Left ventricle myocardium inferior (tissue), 1 donor: ENCODE measurements at regions of chr18 and their contacts with region 1.

Region 1: DNA sequence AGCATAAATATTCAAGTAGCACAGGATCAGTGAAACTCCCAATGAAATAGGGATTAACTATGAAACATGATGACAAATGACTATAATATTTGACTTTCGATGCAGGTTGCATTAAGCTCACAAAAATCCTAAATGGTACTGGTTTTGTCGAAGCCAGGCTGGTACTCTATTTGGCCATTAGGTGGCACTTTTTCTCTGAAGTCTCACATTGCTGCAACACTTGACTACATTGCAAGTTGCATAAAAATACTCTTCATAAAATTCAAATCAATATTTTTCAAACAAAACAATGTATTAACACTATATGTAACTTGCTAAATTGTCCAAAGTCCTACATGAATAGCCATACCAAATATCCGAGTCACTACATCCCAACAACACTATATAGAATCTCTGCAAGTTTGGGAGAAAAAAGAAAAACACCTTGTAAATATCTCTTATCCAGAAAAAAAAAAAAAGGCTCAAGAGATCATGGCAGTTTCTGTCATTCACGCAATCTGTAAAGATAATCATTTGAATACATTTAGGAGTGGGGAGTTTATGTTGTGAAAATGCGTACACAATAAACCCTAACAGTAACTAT is 9.5 kb downstream of the RTTN start:
- DNase-seq: no peak
- H3K4me3 ChIP-seq: no peak overlapping the region
- H3K27ac ChIP-seq: peak overlapping the region; percentile 50
- H3K4me1 ChIP-seq: peaks cover 6% of the 10 kb centered on the region
- H3K27me3 ChIP-seq: no peaks in the 10 kb centered on the region
- CTCF ChIP-seq: peak; percentile 85

Region 2: DNA sequence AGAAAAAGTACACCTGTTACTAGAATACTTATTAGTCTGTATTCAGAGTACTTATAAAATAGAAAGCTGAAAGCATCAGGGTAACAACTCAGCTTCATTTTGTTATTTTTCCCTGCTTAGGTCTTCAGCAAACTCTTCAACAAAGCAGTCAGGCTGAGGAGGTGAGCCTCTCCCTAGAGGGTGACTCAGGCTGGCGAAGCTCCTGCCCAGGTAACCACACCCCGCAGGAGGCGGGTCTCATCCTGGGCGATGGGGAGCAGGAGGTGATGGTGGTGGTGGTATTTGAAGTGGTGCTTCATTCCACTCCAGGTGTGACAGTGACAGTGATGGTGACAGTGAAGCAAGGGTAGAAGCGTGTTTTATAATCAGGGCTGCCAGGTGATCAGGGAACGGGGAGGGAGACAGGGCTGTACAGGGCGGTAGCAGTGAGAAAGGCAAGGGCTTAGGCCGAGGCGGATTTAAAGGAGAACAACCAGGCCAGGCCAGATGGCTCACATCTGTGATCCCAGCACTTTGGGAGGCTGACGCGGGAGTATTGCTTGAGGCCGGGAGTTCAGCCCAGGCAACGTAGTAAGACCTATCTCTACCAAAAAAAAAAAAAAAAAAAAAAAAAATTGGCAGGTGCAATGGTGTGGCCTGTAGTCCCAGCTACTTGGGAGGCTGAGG is 220.0 kb after region 1 on chr18:
- intact Hi-C with region 1: no loop called
- DNase-seq: no peak
- H3K4me3 ChIP-seq: no peak overlapping the region
- H3K27ac ChIP-seq: no peak overlapping the region
- H3K4me1 ChIP-seq: peaks cover 25% of the 10 kb centered on the region
- H3K27me3 ChIP-seq: no peaks in the 10 kb centered on the region
- CTCF ChIP-seq: no peak

Region 3: DNA sequence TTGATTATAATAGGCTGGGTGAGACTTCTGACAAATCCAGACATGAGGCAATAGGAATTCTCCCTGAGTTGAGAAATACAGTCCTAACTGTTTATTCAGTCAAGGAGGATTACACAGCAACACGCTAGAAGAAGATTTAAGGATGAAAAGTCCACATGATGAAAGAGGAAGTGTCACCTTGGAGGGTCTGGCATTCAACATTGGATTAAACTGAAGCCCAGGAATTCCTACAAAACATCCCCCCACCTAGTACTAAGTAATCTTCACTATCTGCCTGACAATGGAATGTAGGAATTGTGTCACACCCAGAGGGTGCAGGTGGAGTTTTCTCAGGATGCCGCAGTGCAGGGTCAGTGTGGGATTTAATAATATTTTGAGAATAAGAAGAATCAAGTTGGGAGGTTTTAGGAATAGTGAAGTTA is 235.3 kb after region 1 on chr18:
- intact Hi-C with region 1: loop called (anchors 2 kb)
- DNase-seq: no peak
- H3K4me3 ChIP-seq: no peak overlapping the region
- H3K27ac ChIP-seq: no peak overlapping the region
- H3K4me1 ChIP-seq: peaks cover 5% of the 10 kb centered on the region
- H3K27me3 ChIP-seq: no peaks in the 10 kb centered on the region
- CTCF ChIP-seq: no peak